ENCODE measurements at regions of chr11 and their contacts with region 1.

Region 1: GRCh38 chr11:95231127-95231880 is at the start of gene SESN3:
- DNase-seq: peak; percentile 99
- H3K4me3 Mint-ChIP-seq: no peak within 1 kb of the TSS
- H3K27ac Mint-ChIP-seq: peak within 1 kb of the TSS; percentile 93
- H3K4me1 Mint-ChIP-seq: peaks cover 56% of the 10 kb centered on the region
- H3K27me3 Mint-ChIP-seq: peaks cover 7% of the 10 kb centered on the region

Region 2: GRCh38 chr11:94786264-94787126 is 444.8 kb before region 1 on chr11:
- CTCF ChIA-PET with region 1: no interaction called
- DNase-seq: no peak
- H3K4me3 Mint-ChIP-seq: no peak overlapping the region
- H3K27ac Mint-ChIP-seq: no peak overlapping the region
- H3K4me1 Mint-ChIP-seq: peaks cover 5% of the 10 kb centered on the region
- H3K27me3 Mint-ChIP-seq: peaks cover 10% of the 10 kb centered on the region

Region 3: GRCh38 chr11:95121698-95122097 is 109.6 kb before region 1 on chr11:
- CTCF ChIA-PET with region 1: no interaction called
- DNase-seq: no peak
- H3K4me3 Mint-ChIP-seq: no peak overlapping the region
- H3K27ac Mint-ChIP-seq: no peak overlapping the region
- H3K4me1 Mint-ChIP-seq: no peaks in the 10 kb centered on the region
- H3K27me3 Mint-ChIP-seq: no peaks in the 10 kb centered on the region

Region 4: DNA sequence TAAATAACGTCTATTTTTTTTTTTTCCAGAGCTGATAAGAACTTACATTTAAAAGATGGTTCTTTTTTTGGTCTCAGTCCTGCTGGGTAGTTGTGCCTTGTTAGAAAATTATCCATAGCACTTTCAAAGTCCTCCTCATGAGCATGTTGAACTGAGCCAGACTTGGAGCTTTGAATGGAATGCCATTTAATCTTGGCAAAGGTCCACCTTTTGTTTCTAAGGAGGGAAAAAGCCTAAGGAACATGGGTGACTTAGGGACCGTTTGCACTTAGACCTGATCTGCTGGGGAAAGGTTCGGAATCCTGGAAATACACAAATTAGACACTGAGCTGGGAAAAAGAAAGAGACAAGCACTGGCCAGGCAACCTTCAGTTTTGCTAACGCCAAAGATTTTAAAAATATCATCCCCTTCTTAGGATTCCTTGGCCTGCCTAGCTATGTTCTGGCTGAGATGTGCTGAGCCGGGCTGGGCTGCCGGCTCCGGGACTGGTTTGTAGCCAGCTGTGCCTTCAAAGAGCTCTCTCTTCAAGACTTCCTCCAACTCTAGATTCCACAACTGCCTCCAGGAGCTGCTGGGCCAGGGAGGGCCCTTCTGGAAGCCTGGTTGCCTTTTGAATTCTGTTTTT is 74.3 kb before region 1 on chr11:
- CTCF ChIA-PET with region 1: interaction called, 18 read pairs
- DNase-seq: no peak
- H3K4me3 Mint-ChIP-seq: no peak overlapping the region
- H3K27ac Mint-ChIP-seq: no peak overlapping the region
- H3K4me1 Mint-ChIP-seq: peaks cover 36% of the 10 kb centered on the region
- H3K27me3 Mint-ChIP-seq: no peaks in the 10 kb centered on the region

Region 5: GRCh38 chr11:95254131-95254704 is 22.9 kb after region 1 on chr11:
- CTCF ChIA-PET with region 1: interaction called, 22 read pairs
- DNase-seq: peak; percentile 90
- H3K4me3 Mint-ChIP-seq: peak overlapping the region; percentile 69
- H3K27ac Mint-ChIP-seq: peak overlapping the region; percentile 86
- H3K4me1 Mint-ChIP-seq: peaks cover 49% of the 10 kb centered on the region
- H3K27me3 Mint-ChIP-seq: no peaks in the 10 kb centered on the region

Region 6: GRCh38 chr11:95697614-95698408 is 466.5 kb after region 1 on chr11:
- CTCF ChIA-PET with region 1: interaction called, 76 read pairs
- DNase-seq: no peak
- H3K4me3 Mint-ChIP-seq: no peak overlapping the region
- H3K27ac Mint-ChIP-seq: peak overlapping the region; percentile 56
- H3K4me1 Mint-ChIP-seq: peaks cover 73% of the 10 kb centered on the region
- H3K27me3 Mint-ChIP-seq: no peaks in the 10 kb centered on the region

Region 7: GRCh38 chr11:95705485-95706124 is 474.3 kb after region 1 on chr11:
- CTCF ChIA-PET with region 1: interaction called, 76 read pairs
- DNase-seq: peak; percentile 92
- H3K4me3 Mint-ChIP-seq: no peak overlapping the region
- H3K27ac Mint-ChIP-seq: no peak overlapping the region
- H3K4me1 Mint-ChIP-seq: peaks cover 14% of the 10 kb centered on the region
- H3K27me3 Mint-ChIP-seq: no peaks in the 10 kb centered on the region